ENCODE measurements at regions of chr3 and their contacts with region 1.

Region 1: DNA sequence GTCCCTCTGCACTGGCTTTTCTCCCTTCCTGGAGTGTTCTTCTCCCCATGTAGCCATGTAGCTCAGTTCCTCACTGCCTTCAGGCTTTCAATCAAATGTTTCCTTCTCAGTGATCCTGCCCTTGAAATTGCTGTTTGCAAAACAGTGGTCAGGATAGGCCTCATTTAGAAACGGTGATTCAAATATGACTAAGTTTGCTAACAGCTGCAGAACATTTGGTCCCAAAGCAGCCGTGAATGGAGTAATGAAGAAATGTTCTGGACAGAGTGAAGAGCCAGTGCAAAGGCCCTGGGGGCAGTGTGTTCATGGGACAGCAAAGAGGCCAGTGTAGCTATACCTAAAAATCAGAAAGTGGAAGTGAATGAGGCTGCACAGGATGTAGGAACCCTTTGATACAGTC is 223.4 kb downstream of the FEZF2 start:
- DNase-seq: no peak
- H3K4me3 ChIP-seq: no peak overlapping the region
- H3K27ac ChIP-seq: no peak overlapping the region
- H3K4me1 ChIP-seq: no peaks in the 10 kb centered on the region
- H3K27me3 ChIP-seq: no peaks in the 10 kb centered on the region
- CTCF ChIP-seq: no peak

Region 2: DNA sequence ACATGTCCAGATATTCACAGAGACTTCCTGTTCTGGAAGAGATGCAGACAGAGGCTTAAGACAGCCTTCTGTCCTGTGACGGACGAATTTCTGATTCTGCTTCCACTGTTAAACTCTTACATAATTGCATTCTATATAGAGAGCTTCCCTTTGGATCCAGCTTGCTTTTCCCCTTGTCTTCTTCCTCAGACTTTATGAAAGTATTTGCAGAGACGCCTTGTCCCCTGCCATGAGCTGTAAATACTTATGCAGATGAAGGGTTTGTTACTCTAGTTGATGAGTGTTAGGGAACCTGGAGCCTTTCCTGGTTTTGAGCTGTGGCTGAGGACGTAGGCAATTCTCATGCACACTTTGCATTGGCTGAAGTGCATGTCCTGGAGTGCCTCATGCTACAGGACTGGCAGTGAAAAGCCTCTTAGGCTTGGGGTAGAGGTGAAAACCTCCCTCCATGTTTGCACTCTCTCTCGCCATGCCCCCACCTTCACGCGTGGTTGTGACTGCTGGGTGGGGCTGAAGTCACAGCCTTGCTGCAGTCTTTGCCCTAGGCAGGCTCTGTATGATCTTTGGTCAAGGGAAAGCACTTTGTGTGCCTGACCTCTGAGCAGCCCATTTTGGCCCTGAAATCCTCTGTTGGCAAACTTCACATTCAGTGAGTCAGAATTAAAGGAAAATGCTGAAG is 302.0 kb before region 1 on chr3:
- CTCF ChIA-PET with region 1: interaction called, 13 read pairs
- POLR2A ChIA-PET with region 1: no interaction called
- intact Hi-C with region 1: no loop called
- DNase-seq: no peak
- H3K4me3 ChIP-seq: no peak overlapping the region
- H3K27ac ChIP-seq: no peak overlapping the region
- H3K4me1 ChIP-seq: no peaks in the 10 kb centered on the region
- H3K27me3 ChIP-seq: no peaks in the 10 kb centered on the region
- CTCF ChIP-seq: no peak

Region 3: GRCh38 chr3:62084597-62084996 is 65.4 kb before region 1 on chr3:
- CTCF ChIA-PET with region 1: no interaction called
- POLR2A ChIA-PET with region 1: no interaction called
- intact Hi-C with region 1: no loop called
- DNase-seq: peak; percentile 37 to 72
- H3K4me3 ChIP-seq: no peak overlapping the region
- H3K27ac ChIP-seq: peak overlapping the region; percentile 42
- H3K4me1 ChIP-seq: peaks cover 17% of the 10 kb centered on the region
- H3K27me3 ChIP-seq: no peaks in the 10 kb centered on the region
- CTCF ChIP-seq: no peak

Measured in PC-9 (cell line).